WTC11 (cell line): ENCODE measurements at regions of chr5 and their contacts with region 1.

Region 1: DNA sequence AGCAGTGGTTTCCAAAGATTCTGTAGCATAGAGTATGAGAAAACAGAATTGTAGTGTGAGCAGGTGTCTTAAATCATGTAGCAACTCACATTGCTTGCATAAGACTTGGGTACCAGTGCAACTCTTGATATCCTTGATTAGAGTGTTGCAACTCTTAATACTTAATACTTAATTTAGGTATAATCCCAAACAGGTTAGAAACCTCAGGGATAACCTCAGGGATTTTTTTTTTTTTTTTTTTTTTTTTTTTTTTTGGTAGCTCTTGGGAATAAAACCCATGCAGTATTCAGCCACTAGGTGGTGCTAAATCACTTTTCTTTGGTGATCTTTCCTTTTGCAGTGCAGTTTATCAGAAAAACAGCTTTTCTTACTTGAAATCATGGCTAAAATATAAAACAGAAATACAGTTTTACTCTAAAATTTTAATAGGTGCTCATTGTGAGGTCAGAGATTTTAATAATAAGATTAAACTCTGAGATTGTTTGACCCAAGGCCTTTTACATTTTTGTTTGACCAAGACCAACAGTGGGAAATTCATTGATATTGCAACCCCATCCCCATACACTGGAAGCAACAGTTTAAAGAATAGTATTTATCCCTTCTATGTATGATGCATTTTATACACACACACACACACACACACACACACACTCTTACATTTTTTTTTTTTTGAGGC is 55.3 kb downstream of the ERAP1 start:
- DNase-seq: no peak
- ATAC-seq: no peak
- H3K4me3 Mint-ChIP-seq: no peak overlapping the region
- H3K27ac Mint-ChIP-seq: no peak overlapping the region
- H3K4me1 Mint-ChIP-seq: no peaks in the 10 kb centered on the region
- H3K27me3 Mint-ChIP-seq: no peaks in the 10 kb centered on the region
- CTCF ChIP-seq: peak; percentile 37

Region 2: DNA sequence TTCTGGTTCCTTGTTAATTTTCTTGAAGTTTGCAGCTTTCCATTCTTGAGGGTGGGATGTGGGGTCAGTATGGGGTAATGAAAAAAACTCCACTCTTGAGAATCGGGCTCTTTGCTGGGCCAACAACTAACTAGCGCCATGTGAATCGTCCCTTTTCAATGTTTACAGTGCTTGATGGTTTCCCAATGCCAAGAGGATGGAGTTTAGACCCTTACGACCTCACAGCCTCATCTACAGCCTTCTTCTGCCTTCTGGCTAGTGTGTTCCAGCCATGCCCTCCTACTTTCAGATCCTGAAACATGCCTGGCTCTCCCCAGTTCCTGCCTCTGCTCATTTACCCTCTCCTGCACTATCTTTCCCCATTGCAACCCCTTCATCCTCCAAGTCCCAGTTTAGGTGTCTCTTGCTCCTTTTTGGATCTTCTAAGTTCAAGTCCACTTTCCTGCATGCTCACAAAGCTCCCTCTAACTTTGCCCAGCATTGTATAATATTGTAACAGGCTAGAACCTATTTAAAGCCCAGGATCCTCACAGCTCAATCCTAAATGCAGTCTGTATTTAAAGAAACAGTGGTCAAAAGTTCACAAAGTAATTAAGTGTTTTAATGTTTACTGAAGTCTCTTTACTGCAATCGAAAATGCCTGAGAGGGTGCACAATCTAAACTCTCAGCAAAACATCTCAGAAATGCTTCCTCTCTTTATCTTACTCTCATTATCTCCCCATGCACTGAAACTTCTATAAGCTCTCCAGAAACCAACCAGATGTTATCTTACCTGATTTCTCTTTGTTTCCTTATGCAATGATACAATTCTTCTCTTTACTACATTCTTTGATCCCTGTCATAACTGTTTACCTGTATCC is 110.9 kb before region 1 on chr5:
- CTCF ChIA-PET with region 1: no interaction called
- POLR2A ChIA-PET with region 1: no interaction called
- DNase-seq: no peak
- ATAC-seq: no peak
- H3K4me3 Mint-ChIP-seq: no peak overlapping the region
- H3K27ac Mint-ChIP-seq: no peak overlapping the region
- H3K4me1 Mint-ChIP-seq: no peaks in the 10 kb centered on the region
- H3K27me3 Mint-ChIP-seq: no peaks in the 10 kb centered on the region
- CTCF ChIP-seq: no peak

Region 3: DNA sequence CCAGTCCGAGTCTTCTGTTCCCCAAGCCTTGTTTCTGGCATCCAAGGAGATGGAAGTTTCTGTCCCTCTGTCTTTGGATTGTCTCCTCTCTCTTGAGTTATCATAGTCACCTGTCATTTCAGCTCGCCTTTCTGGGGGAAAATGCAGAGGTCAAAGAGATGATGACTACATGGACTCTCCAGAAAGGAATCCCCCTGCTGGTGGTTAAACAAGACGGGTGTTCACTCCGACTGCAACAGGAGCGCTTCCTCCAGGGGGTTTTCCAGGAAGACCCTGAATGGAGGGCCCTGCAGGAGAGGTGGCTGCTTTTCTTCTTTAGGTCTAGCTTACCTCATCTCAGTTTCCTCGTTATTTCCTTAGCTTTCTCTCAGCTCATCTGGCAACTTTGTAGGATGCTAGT is 148.9 kb after region 1 on chr5:
- CTCF ChIA-PET with region 1: interaction called, 12 read pairs
- POLR2A ChIA-PET with region 1: no interaction called
- DNase-seq: no peak
- ATAC-seq: peak; percentile 95
- H3K4me3 Mint-ChIP-seq: no peak overlapping the region
- H3K27ac Mint-ChIP-seq: no peak overlapping the region
- H3K4me1 Mint-ChIP-seq: no peaks in the 10 kb centered on the region
- H3K27me3 Mint-ChIP-seq: no peaks in the 10 kb centered on the region
- CTCF ChIP-seq: no peak

Region 4: GRCh38 chr5:96997265-96997859 is 244.9 kb after region 1 on chr5:
- CTCF ChIA-PET with region 1: interaction called, 12 read pairs
- POLR2A ChIA-PET with region 1: no interaction called
- DNase-seq: no peak
- ATAC-seq: peak; percentile 47; the same call in 1 of the 2 replicates
- H3K4me3 Mint-ChIP-seq: no peak overlapping the region
- H3K27ac Mint-ChIP-seq: no peak overlapping the region
- H3K4me1 Mint-ChIP-seq: peaks cover 4% of the 10 kb centered on the region; the same call in 1 of the 2 replicates
- H3K27me3 Mint-ChIP-seq: no peaks in the 10 kb centered on the region
- CTCF ChIP-seq: no peak; the same call in none of the 2 replicates

Region 5: DNA sequence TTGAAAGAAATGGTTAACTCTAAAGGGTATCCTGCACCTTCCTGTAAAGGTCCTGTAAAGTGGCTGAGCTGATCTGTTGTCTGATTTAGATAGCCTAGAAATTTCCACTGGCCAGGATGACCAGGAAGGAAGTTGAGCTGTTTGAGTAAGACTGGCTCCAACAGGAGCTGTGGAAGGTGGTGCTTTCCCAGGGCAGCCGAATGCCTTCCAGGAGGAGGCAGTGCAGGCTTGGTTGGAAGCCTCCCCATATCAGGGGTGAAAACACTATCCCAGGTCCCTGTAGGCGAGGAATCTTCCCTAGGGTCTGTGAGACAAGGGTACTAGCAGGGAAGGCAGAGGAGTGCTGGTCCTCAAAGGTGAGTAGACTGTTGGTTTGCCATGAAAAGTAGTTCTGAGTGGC is 291.6 kb after region 1 on chr5:
- CTCF ChIA-PET with region 1: interaction called, 10 read pairs
- POLR2A ChIA-PET with region 1: no interaction called
- DNase-seq: peak; percentile 76
- ATAC-seq: peak; percentile 97
- H3K4me3 Mint-ChIP-seq: no peak overlapping the region
- H3K27ac Mint-ChIP-seq: no peak overlapping the region; the same call in 1 of the 2 replicates
- H3K4me1 Mint-ChIP-seq: peaks cover 33% of the 10 kb centered on the region
- H3K27me3 Mint-ChIP-seq: no peaks in the 10 kb centered on the region
- CTCF ChIP-seq: peak; percentile 30; the same call in 1 of the 2 replicates

Region 6: DNA sequence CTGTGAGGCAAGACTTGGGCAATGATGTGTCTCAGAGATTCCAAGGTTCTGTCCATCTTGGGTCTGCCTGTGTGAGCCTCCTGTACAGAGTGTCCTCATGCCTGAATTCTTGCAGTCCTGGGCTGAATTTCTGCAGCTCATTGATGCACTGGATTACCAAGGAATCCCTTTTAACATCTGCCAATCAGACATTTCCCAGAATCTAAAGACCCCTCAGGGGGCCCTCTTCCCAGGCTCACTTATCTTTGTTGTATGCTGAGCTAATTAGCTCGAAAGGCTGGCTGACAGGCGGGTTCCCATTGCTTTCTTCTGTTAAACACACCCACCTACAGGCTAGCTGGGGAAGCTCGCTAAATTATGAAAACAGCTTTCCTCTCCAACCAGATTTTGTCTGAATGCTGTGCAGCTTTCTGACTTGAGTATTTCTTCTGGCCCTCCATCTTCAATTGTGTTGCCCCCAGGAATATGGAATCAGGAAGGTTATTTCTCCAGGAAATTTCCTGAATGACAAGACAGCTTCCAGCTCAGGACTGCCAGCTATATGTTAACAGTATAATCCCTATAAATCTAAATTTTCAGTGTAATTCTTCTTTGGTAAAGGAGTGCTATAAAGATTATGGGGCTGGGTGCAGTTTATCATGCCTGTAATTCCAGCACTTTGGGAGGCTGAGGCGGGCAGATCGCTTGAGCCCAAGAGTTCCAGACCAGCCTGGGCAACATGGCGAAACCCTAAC is 390.2 kb after region 1 on chr5 and contains the start of gene LIX1:
- CTCF ChIA-PET with region 1: interaction called, 28 read pairs
- POLR2A ChIA-PET with region 1: interaction called, 7 read pairs
- DNase-seq: peak; percentile 59
- ATAC-seq: peak; percentile 92
- H3K4me3 Mint-ChIP-seq: no peak within 1 kb of the TSS
- H3K27ac Mint-ChIP-seq: peak within 1 kb of the TSS; percentile 43; the same call in 1 of the 2 replicates
- H3K4me1 Mint-ChIP-seq: peaks cover 28% of the 10 kb centered on the region
- H3K27me3 Mint-ChIP-seq: no peaks in the 10 kb centered on the region
- CTCF ChIP-seq: no peak
- total RNA-seq, gene LIX1: not detected in 3 replicates

Region 7: GRCh38 chr5:97148288-97148687 is 395.8 kb after region 1 on chr5:
- CTCF ChIA-PET with region 1: interaction called, 28 read pairs
- POLR2A ChIA-PET with region 1: no interaction called
- DNase-seq: no peak
- ATAC-seq: no peak
- H3K4me3 Mint-ChIP-seq: no peak overlapping the region
- H3K27ac Mint-ChIP-seq: no peak overlapping the region
- H3K4me1 Mint-ChIP-seq: peaks cover 5% of the 10 kb centered on the region
- H3K27me3 Mint-ChIP-seq: no peaks in the 10 kb centered on the region
- CTCF ChIP-seq: no peak